Activated B cell treated with CpG ODN at 0.5 μM for 24 hours (primary cell): ENCODE measurements at regions of chr7 and their contacts with region 1.

Region 1: DNA sequence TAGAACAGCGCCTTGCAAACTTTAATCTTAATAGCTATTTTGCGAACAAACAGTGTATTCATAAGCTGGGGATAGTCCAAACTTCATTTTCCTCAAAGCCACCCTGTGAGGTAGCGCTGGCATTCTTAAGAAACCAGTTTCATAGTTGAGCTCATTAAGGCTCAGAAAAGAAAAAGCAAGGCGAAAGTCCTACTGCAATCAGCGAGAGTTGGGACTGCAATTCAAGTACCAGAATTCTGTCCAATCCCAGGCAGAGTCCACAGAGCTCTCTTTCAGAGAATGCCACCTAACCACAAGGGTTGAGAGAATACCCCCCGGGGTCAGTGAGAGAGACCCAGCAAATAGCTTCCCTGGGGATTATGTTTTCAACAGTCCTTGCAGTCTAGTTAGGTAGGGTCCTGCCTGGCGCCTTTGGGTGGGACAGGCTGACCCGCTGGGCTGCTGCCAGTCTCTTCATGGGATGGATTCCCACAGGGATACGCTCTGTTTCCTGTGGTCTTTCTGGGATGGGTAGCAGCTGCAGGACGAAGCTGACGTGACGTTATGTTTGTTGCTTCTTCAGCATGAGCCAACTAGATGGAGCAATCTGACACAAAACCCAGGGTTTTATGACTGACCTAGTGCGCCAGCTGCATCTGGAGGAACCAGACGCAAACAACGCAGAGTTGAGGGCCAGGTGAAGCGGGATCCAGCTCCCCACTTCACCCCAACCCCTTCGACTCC is 16.0 kb downstream of the BMPER start:
- DNase-seq: no peak
- ATAC-seq: no peak
- H3K4me3 Mint-ChIP-seq: no peak overlapping the region
- H3K27ac Mint-ChIP-seq: no peak overlapping the region
- H3K4me1 Mint-ChIP-seq: no peaks in the 10 kb centered on the region
- H3K27me3 Mint-ChIP-seq: peaks cover 16% of the 10 kb centered on the region
- CTCF ChIP-seq: no peak

Region 2: DNA sequence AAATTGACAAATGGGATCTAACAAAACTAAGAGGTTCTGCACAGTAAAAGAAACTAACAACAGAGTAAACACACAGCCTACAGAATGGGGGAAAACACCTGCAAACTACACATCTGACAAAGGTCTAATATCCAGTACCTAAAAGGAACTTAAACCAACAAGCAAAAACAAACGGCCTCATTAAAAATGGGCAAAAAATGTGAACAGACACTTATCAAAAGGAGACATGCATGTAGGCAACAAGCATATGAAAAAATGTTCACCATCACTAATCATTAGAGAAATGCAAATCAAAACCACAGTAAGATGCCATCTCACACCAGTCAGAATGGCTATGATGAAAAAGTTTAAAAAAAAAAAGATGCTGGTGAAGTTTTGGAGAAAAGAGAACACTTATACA is 1227.2 kb before region 1 on chr7:
- CTCF ChIA-PET with region 1: no interaction called
- POLR2A ChIA-PET with region 1: no interaction called
- intact Hi-C with region 1: no loop called
- DNase-seq: no peak
- ATAC-seq: no peak
- H3K4me3 Mint-ChIP-seq: no peak overlapping the region
- H3K27ac Mint-ChIP-seq: no peak overlapping the region
- H3K4me1 Mint-ChIP-seq: peaks cover 15% of the 10 kb centered on the region
- H3K27me3 Mint-ChIP-seq: no peaks in the 10 kb centered on the region
- CTCF ChIP-seq: no peak

Region 3: GRCh38 chr7:33932832-33933468 is 11.6 kb after region 1 on chr7:
- CTCF ChIA-PET with region 1: interaction called, 17 read pairs
- POLR2A ChIA-PET with region 1: no interaction called
- intact Hi-C with region 1: no loop called
- DNase-seq: peak; percentile 37
- ATAC-seq: peak; percentile 42
- H3K4me3 Mint-ChIP-seq: no peak overlapping the region
- H3K27ac Mint-ChIP-seq: no peak overlapping the region
- H3K4me1 Mint-ChIP-seq: no peaks in the 10 kb centered on the region
- H3K27me3 Mint-ChIP-seq: peaks cover 8% of the 10 kb centered on the region
- CTCF ChIP-seq: peak; percentile 36